ENCODE measurements at regions of chr6 and their contacts with region 1.

Region 1: DNA sequence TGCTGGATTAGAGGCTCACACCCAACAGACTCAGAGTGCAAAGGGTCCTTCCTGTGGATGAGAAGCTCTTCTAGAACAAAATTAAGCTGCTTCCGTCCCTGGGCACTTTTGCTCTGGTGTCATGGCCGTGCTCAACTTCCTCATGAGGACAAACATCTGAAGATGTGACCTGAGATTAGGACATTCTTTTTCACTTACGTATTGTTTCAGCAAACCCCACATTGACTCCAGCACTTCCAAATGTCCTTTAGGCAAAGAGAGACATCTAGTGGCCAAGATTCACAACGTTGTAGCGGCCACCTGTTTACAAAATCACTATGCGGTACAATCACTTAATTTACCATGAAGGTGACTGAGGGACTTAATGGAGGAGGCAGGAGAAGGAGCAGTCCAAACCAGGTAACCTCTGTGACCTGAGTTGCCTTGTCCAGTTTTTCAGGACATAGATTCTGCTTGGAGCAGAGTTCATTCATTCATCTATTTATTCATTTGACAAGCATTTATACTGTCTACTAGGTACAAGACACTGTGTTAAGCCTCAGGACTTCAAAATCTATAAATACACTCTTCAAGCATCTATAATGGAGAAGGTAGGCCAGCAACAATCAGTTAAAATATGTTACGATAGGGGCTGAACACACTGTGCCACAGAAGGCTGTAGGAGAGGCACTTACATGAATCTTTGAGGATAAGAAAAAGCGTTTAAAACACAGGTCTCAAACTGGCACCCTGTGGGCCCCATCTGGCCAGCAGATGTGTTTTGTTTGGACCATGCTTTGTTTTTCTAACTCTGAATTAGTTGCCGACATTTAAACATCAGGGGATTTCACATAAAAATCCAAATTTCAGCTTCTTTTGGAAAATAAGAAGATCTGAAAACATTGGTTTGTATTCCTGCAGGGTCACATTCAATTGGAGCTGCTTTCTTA is 5.6 kb upstream of the ADGRF1 start:
- DNase-seq: peak; percentile 53
- H3K4me3 ChIP-seq: no peak overlapping the region
- H3K27me3 ChIP-seq: no peaks in the 10 kb centered on the region
- CTCF ChIP-seq: peak; percentile 81

Region 2: DNA sequence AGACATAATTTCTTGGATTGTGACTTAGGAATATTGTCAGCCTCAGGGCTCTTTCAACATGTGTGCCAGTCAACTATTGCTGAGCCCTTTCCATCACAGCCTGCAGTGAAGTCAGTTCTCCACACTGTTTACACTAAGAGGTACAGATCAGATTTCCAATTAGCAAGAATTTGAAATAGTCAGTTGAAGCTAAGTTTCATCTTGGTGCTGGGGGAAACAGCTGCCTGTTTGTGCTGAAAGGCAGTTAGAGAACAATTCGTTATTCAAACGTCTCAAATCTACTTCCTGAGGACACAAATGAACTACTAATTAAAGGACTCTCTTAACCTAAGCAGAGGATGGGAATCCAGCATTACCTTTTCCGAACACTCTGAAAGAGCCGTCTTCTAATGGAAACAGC is 31.5 kb before region 1 on chr6:
- CTCF ChIA-PET with region 1: no interaction called
- POLR2A ChIA-PET with region 1: no interaction called
- DNase-seq: no peak
- H3K4me3 ChIP-seq: no peak overlapping the region
- H3K27me3 ChIP-seq: no peaks in the 10 kb centered on the region; the same call in 1 of the 2 replicates
- CTCF ChIP-seq: no peak

Region 3: GRCh38 chr6:47034919-47035318 is 12.8 kb before region 1 on chr6:
- CTCF ChIA-PET with region 1: interaction called, 44 read pairs
- POLR2A ChIA-PET with region 1: no interaction called
- DNase-seq: peak; percentile 85
- H3K4me3 ChIP-seq: no peak overlapping the region
- H3K27me3 ChIP-seq: peaks cover 6% of the 10 kb centered on the region
- CTCF ChIP-seq: no peak

Measured in BJ (cell line).